ENCODE measurements at regions of chr2 and their contacts with region 1.

Region 1: DNA sequence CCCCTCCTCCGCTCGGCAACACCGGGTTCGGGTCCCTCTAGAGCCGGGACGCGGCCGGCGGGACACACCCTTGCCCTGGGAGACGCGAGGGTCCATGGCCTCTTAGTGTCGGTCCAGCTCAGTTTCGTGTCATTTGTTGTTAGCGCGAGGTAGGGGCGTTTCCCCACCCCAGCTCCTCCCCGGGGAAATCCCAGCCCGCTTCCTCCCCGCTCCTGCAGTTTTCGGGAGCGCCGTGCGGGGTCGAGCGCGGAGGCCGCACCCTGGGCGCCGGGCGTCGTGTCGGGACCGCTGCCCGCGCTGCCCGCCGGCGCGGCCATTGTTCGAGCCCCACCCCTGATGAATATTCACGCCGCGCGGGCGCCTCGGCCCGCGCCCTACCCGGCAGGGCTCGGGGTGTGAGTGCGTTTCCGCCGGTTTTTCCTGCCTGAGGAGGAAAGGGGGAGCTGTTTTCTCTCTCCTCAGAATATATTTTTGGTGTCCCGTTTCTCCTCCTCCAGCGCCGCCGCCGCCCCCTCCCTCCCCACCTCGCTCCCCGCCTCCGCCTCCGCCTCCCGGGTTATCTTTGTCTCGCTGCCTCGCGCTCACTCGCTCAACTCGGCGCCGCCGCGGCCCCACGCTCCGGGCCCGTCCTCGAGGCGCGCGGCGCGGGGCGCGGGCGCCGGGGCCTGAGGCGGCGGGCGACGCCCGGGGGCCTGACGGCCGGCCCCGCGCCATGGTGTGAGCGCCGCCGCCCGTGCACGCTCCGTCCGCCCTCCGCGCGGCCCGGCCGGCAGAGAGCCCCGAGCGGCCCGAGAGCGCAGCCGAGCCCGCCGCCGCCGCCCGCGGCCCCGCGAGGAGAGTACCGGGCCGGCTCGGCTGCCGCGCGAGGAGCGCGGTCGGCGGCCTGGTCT is at the start of gene MAP4K4:
- DNase-seq: peak; percentile 44
- ATAC-seq: peak; percentile 83
- H3K4me3 ChIP-seq: peak within 1 kb of the TSS; percentile 69 to 82
- H3K27ac ChIP-seq: peak within 1 kb of the TSS; percentile 89
- H3K4me1 ChIP-seq: peaks cover 8 to 23% of the 10 kb centered on the region in 2 experiments; a peak in 3 of 4 replicates
- H3K27me3 ChIP-seq: no peaks in the 10 kb centered on the region
- CTCF ChIP-seq: peak in 1 of 3 experiments; percentile 6; a peak in 1 of 6 replicates
- POLR2A ChIP-seq: no peak
- RAD21 ChIP-seq: peak; percentile 16
- total RNA-seq, gene MAP4K4: 62.3 TPM

Region 2: GRCh38 chr2:101790857-101791256 is 93.5 kb after region 1 on chr2:
- CTCF ChIA-PET with region 1: no interaction called
- POLR2A ChIA-PET with region 1: no interaction called
- RAD21 ChIA-PET with region 1: no interaction called
- intact Hi-C with region 1: loop called (anchors 1 kb)
- DNase-seq: no peak
- ATAC-seq: no peak
- H3K4me3 ChIP-seq: no peak overlapping the region
- H3K27ac ChIP-seq: no peak overlapping the region
- H3K4me1 ChIP-seq: peaks cover 7 to 14% of the 10 kb centered on the region in 2 experiments; a peak in 3 of 4 replicates
- H3K27me3 ChIP-seq: no peaks in the 10 kb centered on the region
- CTCF ChIP-seq: no peak
- POLR2A ChIP-seq: no peak
- RAD21 ChIP-seq: no peak